ENCODE measurements at regions of chr9 and their contacts with region 1.

Region 1: DNA sequence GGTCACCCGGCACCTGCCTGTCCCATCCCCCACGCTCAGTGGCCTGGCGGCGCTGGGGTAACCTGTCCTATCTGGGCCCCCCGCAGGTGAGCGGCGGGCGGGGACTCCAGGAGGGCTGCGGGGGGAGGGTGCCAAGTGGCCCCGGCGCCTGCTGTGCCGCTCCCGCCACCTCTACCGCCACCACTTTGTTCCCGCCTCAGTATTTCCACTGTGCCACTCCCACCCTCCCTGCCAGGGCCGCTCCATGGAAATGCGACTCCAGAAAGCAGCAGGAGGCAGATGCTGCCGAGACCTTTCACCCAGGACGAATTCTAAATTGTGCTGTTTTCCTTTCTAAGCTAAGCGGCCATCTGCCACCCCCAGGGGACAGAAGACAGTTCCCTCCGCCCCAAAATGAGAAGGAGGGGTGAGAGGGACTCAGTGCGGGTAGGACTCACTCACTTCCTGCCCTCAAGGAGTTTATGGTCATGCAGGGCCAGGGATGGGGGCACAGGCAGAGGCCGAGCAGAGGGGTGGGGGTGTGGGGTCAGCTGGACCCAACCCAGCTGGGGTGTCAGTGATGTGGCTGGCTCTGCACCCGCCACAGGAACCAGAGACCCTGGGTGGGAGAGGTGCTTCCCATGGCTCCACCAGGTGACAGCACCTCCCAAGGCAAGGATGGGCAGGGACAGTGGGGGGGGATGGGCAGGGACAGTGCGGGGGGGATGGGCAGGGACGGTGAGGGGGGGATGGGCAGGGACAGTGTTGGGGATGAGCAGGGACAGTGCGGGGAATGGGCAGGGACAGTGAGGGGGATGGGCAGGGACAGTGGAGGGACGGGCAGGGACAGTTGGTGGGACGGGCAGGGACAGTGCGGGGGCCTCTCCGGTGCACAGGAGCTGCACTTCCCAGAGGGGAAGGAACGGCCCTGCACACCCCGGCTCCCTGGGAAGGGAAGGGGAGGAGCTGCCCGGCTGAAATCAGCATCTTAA is 17.8 kb downstream of the NOTCH1 start:
- DNase-seq: no peak
- H3K4me3 ChIP-seq: no peak overlapping the region
- H3K4me3 Mint-ChIP-seq: no peak overlapping the region
- H3K27ac ChIP-seq: no peak overlapping the region
- H3K27ac Mint-ChIP-seq: peak overlapping the region in 3 of 7 donors; percentile 36 to 78 (median 42)
- H3K4me1 ChIP-seq: peaks cover 47% of the 10 kb centered on the region
- H3K4me1 Mint-ChIP-seq: peaks cover 6 to 28% (median 13%) of the 10 kb centered on the region in 4 donors
- H3K27me3 ChIP-seq: no peaks in the 10 kb centered on the region
- H3K27me3 Mint-ChIP-seq: no peaks in the 10 kb centered on the region

Region 2: DNA sequence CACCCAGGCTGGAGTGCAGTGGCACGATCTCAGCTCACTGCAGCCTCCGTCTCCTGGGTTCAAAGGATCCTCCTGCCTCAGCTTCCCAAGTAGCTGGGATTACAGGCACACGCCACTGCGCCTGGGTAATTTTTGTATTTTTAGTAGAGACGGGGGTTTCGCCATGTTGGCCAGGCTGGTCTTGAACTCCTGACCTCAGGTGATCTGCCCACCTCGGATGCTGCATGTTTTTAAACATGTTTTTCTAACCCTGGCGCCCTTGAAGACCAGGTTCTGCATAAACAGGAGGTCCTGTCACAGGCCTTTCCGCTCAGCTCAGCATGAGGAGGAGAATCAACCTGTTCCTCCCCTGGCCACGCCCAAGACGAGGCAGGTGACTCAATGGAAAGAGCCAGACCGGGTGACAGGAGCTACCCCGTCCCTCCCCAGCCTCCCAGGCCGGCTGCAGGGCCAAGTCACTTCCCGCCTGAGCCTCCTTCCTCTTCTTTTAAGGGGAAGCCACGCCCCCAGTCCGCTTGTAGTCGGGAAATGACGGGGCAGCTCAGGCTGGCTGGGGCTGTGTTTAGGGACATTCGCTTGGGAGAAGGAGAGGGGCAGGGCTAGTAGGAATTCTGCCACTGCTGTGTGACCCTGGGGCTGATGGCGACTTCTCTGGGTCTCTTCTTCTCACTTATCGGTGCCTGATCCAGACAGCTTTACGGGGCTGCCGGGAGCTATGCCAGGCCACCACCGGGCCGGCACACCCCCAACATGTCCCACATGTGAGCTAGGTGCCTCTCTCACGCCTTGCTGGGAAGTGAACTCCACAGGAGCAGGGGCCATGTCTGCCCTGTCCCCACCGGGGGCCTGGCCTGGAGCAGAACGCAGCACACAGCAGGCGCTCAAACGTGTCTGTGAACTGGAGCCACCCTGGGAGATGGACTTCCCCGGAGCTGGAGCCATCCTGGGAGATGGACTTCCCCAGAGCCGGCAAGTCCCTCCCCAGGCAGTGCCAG is 11.7 kb after region 1 on chr9:
- CTCF ChIA-PET with region 1: interaction called, 5 read pairs
- POLR2A ChIA-PET with region 1: interaction called, 27 read pairs
- intact Hi-C with region 1: no loop called
- DNase-seq: peak; percentile 70 to 97 (median 76)
- H3K4me3 ChIP-seq: peak overlapping the region; percentile 52 to 59
- H3K4me3 Mint-ChIP-seq: peak overlapping the region; percentile 86 to 96 (median 91)
- H3K27ac ChIP-seq: peak overlapping the region; percentile 77
- H3K27ac Mint-ChIP-seq: peak overlapping the region; percentile 94 to 100 (median 97)
- H3K4me1 ChIP-seq: peaks cover 88% of the 10 kb centered on the region
- H3K4me1 Mint-ChIP-seq: peaks cover 25 to 69% (median 52%) of the 10 kb centered on the region in 4 donors
- H3K27me3 ChIP-seq: no peaks in the 10 kb centered on the region
- H3K27me3 Mint-ChIP-seq: no peaks in the 10 kb centered on the region